GM12878 (cell line): ENCODE measurements at regions of chr4 and their contacts with region 1.

Region 1: GRCh38 chr4:118772081-118772766 is 63.7 kb downstream of the SEC24D start:
- DNase-seq: no peak
- ATAC-seq: peak; percentile 90
- H3K4me3 ChIP-seq: no peak overlapping the region
- H3K27ac ChIP-seq: no peak overlapping the region
- H3K4me1 ChIP-seq: no peaks in the 10 kb centered on the region
- H3K27me3 ChIP-seq: no peaks in the 10 kb centered on the region
- CTCF ChIP-seq: peak; percentile 26 to 72 (median 53); a peak in 5 of 6 replicates
- EP300 ChIP-seq: no peak
- POLR2A ChIP-seq: no peak
- RAD21 ChIP-seq: peak; percentile 76

Region 2: GRCh38 chr4:118727360-118727759 is 44.9 kb before region 1 on chr4:
- CTCF ChIA-PET with region 1: no interaction called
- POLR2A ChIA-PET with region 1: no interaction called
- RAD21 ChIA-PET with region 1: no interaction called
- SMC1A ChIA-PET with region 1: no interaction called
- in situ Hi-C with region 1: no loop called
- intact Hi-C with region 1: no loop called
- DNase-seq: no peak
- ATAC-seq: no peak
- H3K4me3 ChIP-seq: no peak overlapping the region
- H3K27ac ChIP-seq: no peak overlapping the region
- H3K4me1 ChIP-seq: no peaks in the 10 kb centered on the region
- H3K27me3 ChIP-seq: no peaks in the 10 kb centered on the region
- CTCF ChIP-seq: no peak
- EP300 ChIP-seq: no peak
- POLR2A ChIP-seq: no peak
- RAD21 ChIP-seq: no peak

Region 3: GRCh38 chr4:118752551-118752950 is 19.7 kb before region 1 on chr4:
- CTCF ChIA-PET with region 1: interaction called, 11 read pairs
- POLR2A ChIA-PET with region 1: no interaction called
- RAD21 ChIA-PET with region 1: interaction called, 3 read pairs
- SMC1A ChIA-PET with region 1: no interaction called
- in situ Hi-C with region 1: no loop called
- intact Hi-C with region 1: no loop called
- DNase-seq: no peak
- ATAC-seq: no peak
- H3K4me3 ChIP-seq: no peak overlapping the region
- H3K27ac ChIP-seq: no peak overlapping the region
- H3K4me1 ChIP-seq: no peaks in the 10 kb centered on the region
- H3K27me3 ChIP-seq: no peaks in the 10 kb centered on the region
- CTCF ChIP-seq: no peak
- EP300 ChIP-seq: no peak
- POLR2A ChIP-seq: no peak
- RAD21 ChIP-seq: no peak

Region 4: GRCh38 chr4:118865091-118865708 is 93.0 kb after region 1 on chr4:
- CTCF ChIA-PET with region 1: interaction called, 57 read pairs
- POLR2A ChIA-PET with region 1: no interaction called
- RAD21 ChIA-PET with region 1: interaction called, 6 read pairs
- SMC1A ChIA-PET with region 1: interaction called, 13 read pairs
- in situ Hi-C with region 1: no loop called
- intact Hi-C with region 1: loop called (anchors 1 kb)
- DNase-seq: no peak
- ATAC-seq: peak; percentile 90
- H3K4me3 ChIP-seq: no peak overlapping the region
- H3K27ac ChIP-seq: no peak overlapping the region
- H3K4me1 ChIP-seq: no peaks in the 10 kb centered on the region
- H3K27me3 ChIP-seq: no peaks in the 10 kb centered on the region
- CTCF ChIP-seq: peak; percentile 70 to 80 (median 72)
- EP300 ChIP-seq: no peak
- POLR2A ChIP-seq: no peak
- RAD21 ChIP-seq: peak; percentile 62

Region 5: DNA sequence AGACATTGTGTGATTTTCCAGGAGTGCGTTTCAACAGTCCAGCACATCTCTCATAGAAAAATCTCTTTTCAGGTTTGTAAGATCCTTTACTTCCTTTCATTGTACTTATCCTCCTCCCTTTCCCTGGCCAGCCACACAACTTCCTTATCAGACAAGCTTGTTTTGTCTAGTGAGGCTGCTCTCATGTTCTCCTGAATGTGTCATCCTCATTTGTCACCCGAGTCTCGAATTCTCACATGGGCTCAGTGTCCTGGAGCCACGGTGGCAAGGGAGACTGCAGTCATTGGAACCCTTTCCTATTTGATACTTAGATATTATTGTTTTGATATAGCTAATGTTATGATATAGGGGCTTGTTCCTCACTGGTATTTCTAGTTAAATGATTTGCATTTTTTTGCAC is 133.3 kb after region 1 on chr4:
- CTCF ChIA-PET with region 1: no interaction called
- POLR2A ChIA-PET with region 1: no interaction called
- RAD21 ChIA-PET with region 1: no interaction called
- SMC1A ChIA-PET with region 1: no interaction called
- in situ Hi-C with region 1: no loop called
- intact Hi-C with region 1: no loop called
- DNase-seq: no peak
- ATAC-seq: no peak
- H3K4me3 ChIP-seq: no peak overlapping the region
- H3K27ac ChIP-seq: no peak overlapping the region
- H3K4me1 ChIP-seq: no peaks in the 10 kb centered on the region
- H3K27me3 ChIP-seq: no peaks in the 10 kb centered on the region
- CTCF ChIP-seq: no peak
- EP300 ChIP-seq: no peak
- POLR2A ChIP-seq: no peak
- RAD21 ChIP-seq: no peak

Region 6: DNA sequence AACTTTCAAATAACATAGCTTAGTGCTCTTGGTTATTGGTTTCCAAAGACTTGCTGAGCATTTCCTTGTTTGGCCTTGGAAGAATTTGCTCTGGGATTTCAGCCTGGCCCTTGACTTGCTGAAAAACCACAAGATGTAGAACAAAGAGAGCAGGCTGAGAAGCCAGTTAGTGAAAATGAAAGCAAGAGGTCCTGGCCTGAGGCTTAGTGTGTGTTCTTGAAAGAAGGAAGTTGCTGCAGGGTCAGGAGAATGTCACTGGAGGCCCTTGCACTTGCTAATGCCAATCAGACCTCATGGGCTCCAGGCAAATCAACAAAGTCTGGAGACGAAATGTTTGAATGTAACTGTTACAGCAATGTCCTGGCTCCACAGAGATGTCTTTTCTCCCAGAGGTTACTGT is 195.8 kb after region 1 on chr4:
- CTCF ChIA-PET with region 1: interaction called, 7 read pairs
- POLR2A ChIA-PET with region 1: no interaction called
- RAD21 ChIA-PET with region 1: interaction called, 5 read pairs
- SMC1A ChIA-PET with region 1: no interaction called
- in situ Hi-C with region 1: no loop called
- intact Hi-C with region 1: loop called (anchors 2 kb)
- DNase-seq: peak; percentile 67
- ATAC-seq: peak; percentile 99
- H3K4me3 ChIP-seq: no peak overlapping the region
- H3K27ac ChIP-seq: peak overlapping the region; percentile 71
- H3K4me1 ChIP-seq: peaks cover 15% of the 10 kb centered on the region
- H3K27me3 ChIP-seq: no peaks in the 10 kb centered on the region
- CTCF ChIP-seq: no peak
- EP300 ChIP-seq: 0 out of 4 replicates have a peak, but pooled peaks of 1 of the 2 experiments have one; percentile 7
- POLR2A ChIP-seq: peak; percentile 42; the same call in 1 of the 2 replicates
- RAD21 ChIP-seq: no peak

Region 7: DNA sequence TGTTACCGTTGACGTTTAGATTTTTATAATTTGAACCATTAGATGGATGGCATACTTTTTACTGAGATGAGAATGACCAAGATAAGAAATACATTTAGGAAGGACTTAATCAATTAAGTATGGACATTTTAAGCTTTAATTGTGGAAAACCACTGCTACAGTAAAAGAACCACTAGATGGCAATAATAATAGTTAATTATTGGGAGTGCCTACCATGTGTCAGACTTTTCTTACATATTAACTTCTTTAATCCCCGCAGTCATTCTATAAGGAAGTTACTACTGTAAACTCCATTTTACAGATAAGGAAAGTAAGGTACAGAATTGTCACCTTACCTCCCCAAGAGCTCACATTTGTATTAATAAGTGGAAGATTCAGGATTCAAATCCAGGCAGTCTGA is 314.9 kb after region 1 on chr4:
- CTCF ChIA-PET with region 1: no interaction called
- POLR2A ChIA-PET with region 1: no interaction called
- RAD21 ChIA-PET with region 1: no interaction called
- SMC1A ChIA-PET with region 1: no interaction called
- in situ Hi-C with region 1: no loop called
- intact Hi-C with region 1: no loop called
- DNase-seq: no peak
- ATAC-seq: no peak
- H3K4me3 ChIP-seq: no peak overlapping the region
- H3K27ac ChIP-seq: no peak overlapping the region
- H3K4me1 ChIP-seq: no peaks in the 10 kb centered on the region
- H3K27me3 ChIP-seq: no peaks in the 10 kb centered on the region
- CTCF ChIP-seq: no peak
- EP300 ChIP-seq: no peak
- POLR2A ChIP-seq: no peak
- RAD21 ChIP-seq: no peak

Region 8: GRCh38 chr4:119286377-119287002 is 514.3 kb after region 1 on chr4:
- CTCF ChIA-PET with region 1: no interaction called
- POLR2A ChIA-PET with region 1: no interaction called
- RAD21 ChIA-PET with region 1: no interaction called
- SMC1A ChIA-PET with region 1: no interaction called
- in situ Hi-C with region 1: loop called (anchors 10 kb)
- intact Hi-C with region 1: loop called (anchors 10 kb)
- DNase-seq: no peak
- ATAC-seq: no peak
- H3K4me3 ChIP-seq: no peak overlapping the region
- H3K27ac ChIP-seq: no peak overlapping the region
- H3K4me1 ChIP-seq: no peaks in the 10 kb centered on the region
- H3K27me3 ChIP-seq: no peaks in the 10 kb centered on the region
- CTCF ChIP-seq: peak; percentile 48 to 63 (median 49); a peak in 5 of 6 replicates
- EP300 ChIP-seq: no peak
- POLR2A ChIP-seq: no peak
- RAD21 ChIP-seq: peak; percentile 86